ENCODE measurements at regions of chr15 and their contacts with region 1.

Region 1: DNA sequence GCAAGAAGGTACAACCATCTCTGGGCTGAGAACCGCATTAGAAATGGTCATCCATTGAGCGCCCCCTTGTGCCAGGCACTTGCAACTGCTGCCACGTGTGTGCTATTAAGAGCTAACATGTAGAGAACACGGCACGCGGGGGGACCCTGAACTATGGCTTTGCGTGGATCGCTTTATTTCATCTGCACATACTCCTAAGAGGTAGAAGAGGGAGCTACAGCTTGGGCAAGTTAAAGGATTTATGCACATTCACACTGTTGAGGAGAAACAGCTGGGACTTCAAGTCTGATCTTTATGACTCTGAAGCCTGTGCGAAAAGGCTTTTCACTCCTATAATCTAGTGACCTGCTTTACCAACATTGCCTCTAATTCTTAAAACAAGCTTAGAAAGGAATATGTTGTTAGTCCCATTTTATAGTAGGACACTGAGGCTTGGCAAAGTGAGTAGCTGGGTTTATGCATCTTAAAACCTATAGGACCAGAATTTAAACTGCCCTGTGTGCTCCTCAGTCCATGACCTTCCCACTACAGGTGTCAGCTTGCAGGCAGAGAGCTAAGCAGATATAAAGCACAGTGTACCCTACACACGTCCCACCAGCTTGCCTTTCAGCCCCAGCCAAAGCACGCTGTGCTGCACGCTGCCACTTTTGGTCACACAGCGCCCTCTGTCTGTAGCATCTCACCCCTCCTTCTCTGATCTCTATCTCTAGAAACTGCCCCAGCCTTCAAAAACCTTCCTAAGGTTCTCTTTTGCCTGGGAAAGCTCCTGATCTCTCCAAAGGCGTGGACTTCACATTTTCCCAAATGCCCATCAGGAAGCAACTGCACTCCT is 57.8 kb downstream of the STARD5 start:
- DNase-seq: peak; percentile 79
- CTCF ChIP-seq: peak; percentile 97

Region 2: GRCh38 chr15:80750575-80750974 is 515.6 kb before region 1 on chr15:
- CTCF ChIA-PET with region 1: no interaction called
- POLR2A ChIA-PET with region 1: no interaction called
- DNase-seq: no peak
- CTCF ChIP-seq: no peak

Region 3: DNA sequence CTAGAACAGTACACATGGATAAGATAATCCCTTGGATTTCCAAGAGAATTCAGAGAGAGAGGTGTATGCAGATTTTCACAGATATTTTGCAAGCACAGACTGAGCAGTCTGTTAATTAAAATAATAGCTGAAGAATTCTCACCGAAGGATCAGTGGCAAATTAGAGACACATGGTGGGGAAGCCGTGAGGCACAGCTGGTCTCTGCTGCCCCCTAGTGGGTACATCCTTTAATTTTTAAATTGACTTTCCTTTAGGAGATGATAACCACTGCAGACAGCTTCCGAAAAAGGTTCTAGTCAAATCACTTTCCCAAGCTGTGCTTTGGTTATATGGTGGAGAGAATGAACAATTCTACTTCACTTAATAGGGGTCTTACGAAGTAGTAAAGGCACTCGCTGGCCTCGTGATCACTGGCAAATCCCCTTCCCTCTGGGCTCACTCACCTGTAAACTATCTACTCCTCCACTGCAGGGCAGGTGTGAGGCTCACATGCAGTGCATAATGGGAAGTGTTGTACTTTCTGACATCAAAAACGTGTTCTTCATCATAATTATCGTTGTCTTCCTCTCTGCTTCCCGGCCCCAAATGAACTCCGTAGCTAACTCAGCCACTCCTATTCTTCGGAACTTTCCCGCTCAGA is 296.0 kb before region 1 on chr15:
- CTCF ChIA-PET with region 1: interaction called, 50 read pairs
- POLR2A ChIA-PET with region 1: no interaction called
- DNase-seq: peak; percentile 56
- CTCF ChIP-seq: peak; percentile 53

Region 4: DNA sequence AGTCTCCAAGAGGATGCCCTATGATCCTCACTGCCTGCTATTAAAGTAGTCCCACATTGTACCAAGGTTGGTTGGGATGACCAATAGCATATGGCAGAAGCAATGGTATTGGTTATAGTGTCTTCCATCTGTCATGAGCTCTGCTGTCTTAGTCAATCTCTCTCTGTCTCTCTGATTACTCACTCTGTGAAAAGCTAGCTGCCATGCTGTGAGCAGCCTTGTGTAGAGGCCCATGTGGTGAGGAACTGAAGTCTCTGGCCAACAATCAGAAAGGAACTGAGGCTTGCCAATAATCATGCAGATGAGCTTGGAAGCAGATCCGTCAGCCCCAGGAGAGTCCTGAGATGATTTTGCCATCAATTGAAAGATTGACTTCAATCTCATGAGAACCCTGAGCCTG is 192.4 kb before region 1 on chr15:
- CTCF ChIA-PET with region 1: interaction called, 13 read pairs
- POLR2A ChIA-PET with region 1: no interaction called
- DNase-seq: no peak
- CTCF ChIP-seq: no peak

Region 5: GRCh38 chr15:81146006-81146405 is 120.2 kb before region 1 on chr15:
- CTCF ChIA-PET with region 1: interaction called, 215 read pairs
- POLR2A ChIA-PET with region 1: no interaction called
- DNase-seq: no peak
- CTCF ChIP-seq: no peak

Region 6: GRCh38 chr15:81234819-81235218 is 31.3 kb before region 1 on chr15:
- CTCF ChIA-PET with region 1: interaction called, 25 read pairs
- POLR2A ChIA-PET with region 1: no interaction called
- DNase-seq: no peak
- CTCF ChIP-seq: no peak

Region 7: GRCh38 chr15:81311752-81312464 is 45.7 kb after region 1 on chr15:
- CTCF ChIA-PET with region 1: interaction called, 14 read pairs
- POLR2A ChIA-PET with region 1: no interaction called
- DNase-seq: peak; percentile 47
- CTCF ChIP-seq: no peak

Region 8: GRCh38 chr15:81394603-81395002 is 128.4 kb after region 1 on chr15:
- CTCF ChIA-PET with region 1: interaction called, 37 read pairs
- POLR2A ChIA-PET with region 1: no interaction called
- DNase-seq: no peak
- CTCF ChIP-seq: no peak

Region 9: GRCh38 chr15:81880314-81880713 is 614.2 kb after region 1 on chr15:
- CTCF ChIA-PET with region 1: no interaction called
- POLR2A ChIA-PET with region 1: no interaction called
- DNase-seq: no peak
- CTCF ChIP-seq: no peak